ENCODE measurements at regions of chr2 and their contacts with region 1.

Region 1: DNA sequence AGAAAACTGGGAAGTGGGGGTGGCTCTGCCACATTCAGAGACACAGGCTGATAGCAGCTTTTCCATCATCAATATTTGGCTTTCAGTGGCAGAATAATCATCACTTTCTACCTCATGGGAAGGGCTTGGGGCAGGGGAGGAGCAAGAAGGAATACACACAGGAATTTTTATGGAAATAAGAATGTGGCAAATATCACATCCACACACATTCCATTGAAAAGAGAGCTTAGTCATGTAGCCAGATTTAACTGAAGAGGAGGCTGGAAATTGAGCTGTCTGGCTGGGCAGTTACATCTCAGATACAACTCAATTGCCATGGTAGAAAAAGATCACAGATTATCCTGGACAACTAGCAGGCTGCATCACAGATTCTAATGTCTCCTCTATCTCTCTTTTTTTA is 1474.0 kb upstream of the ACVR2A start:
- ATAC-seq: peak in 3 of 8 experiments; percentile 64 to 93 (median 87)
- H3K4me3 ChIP-seq: no peak overlapping the region
- H3K27ac ChIP-seq: no peak overlapping the region
- H3K4me1 ChIP-seq: peaks cover 0 to 5% of the 10 kb centered on the region in 2 donors

Region 2: GRCh38 chr2:145563741-145564615 is 806.8 kb before region 1 on chr2:
- in situ Hi-C with region 1: no loop called
- ATAC-seq: peak in 1 of 8 experiments; percentile 9
- H3K4me3 ChIP-seq: no peak overlapping the region
- H3K27ac ChIP-seq: no peak overlapping the region
- H3K4me1 ChIP-seq: no peaks in the 10 kb centered on the region

Region 3: GRCh38 chr2:146661473-146662096 is 290.8 kb after region 1 on chr2:
- in situ Hi-C with region 1: loop called in 1 of 9 experiments (anchors 25 kb)
- ATAC-seq: peak in 2 of 8 experiments; percentile 17 to 21
- H3K4me3 ChIP-seq: no peak overlapping the region
- H3K27ac ChIP-seq: no peak overlapping the region
- H3K4me1 ChIP-seq: no peaks in the 10 kb centered on the region

Measured in motor neuron (in vitro differentiated cells).